Aorta (tissue), 5 donors: ENCODE measurements at regions of chr15 and their contacts with region 1.

Region 1: DNA sequence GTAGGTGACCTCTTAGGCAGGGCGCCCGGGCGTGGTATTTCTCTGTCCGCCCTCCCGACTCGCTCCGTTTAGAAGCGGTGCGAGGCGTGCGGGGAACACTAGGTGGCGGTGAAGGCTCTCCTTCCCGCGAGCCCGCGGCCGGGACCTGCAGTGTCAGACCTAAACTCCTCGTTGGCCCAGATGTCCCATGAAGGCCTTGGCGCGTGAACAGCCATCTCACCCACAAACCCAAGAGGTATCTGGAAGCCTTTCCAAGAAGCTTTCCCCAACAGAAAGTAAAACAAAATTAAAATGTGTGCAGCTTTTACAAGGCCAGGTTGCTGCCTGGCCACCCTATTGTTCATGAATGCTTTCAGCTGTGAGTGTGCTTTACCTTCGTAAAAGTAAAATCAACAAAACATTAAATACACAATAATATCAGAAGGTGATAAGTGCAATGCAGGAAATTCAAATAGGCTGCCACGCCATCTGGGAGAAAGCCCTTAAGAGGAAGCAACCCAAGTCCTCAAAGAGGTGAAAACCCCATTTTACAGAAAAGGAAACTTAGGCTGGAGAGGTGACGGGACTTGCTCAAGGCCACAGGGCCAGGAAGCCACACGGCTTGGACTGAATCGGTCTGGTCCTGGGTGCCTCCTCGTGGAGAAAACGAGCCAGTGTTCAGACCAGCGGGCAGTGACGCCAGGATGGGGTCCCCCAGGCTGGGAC is 120.3 kb downstream of the ETFA start:
- DNase-seq: peak; percentile 83 to 94
- ATAC-seq: peak; percentile 84
- H3K4me3 ChIP-seq: no peak overlapping the region
- H3K27ac ChIP-seq: no peak overlapping the region
- H3K4me1 ChIP-seq: no peaks in the 10 kb centered on the region
- H3K27me3 ChIP-seq: no peaks in the 10 kb centered on the region

Region 2: GRCh38 chr15:75994220-75994619 is 196.8 kb before region 1 on chr15:
- intact Hi-C with region 1: no loop called
- DNase-seq: no peak
- ATAC-seq: no peak
- H3K4me3 ChIP-seq: no peak overlapping the region
- H3K27ac ChIP-seq: no peak overlapping the region
- H3K4me1 ChIP-seq: no peaks in the 10 kb centered on the region
- H3K27me3 ChIP-seq: no peaks in the 10 kb centered on the region

Region 3: DNA sequence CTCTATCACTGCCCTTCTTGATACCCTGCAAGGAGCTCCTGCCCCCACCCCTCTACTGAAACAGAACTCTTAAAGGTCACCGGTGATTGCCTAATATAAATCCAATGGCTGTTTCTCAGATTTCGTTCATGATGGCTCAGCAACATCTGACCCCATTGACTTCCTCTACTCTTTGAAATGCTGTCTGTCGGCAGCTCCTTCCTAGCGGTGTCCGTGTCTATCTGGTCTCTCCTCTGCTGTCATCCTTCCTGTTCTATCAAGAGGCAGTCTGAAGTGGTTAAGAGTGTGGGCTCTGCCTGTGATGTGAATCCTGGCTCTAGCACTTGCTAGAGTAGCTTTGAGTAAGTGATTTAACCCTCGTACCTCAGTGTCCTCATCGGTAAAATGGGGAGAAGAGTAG is 125.7 kb before region 1 on chr15:
- intact Hi-C with region 1: no loop called
- DNase-seq: no peak
- ATAC-seq: no peak
- H3K4me3 ChIP-seq: no peak overlapping the region
- H3K27ac ChIP-seq: no peak overlapping the region
- H3K4me1 ChIP-seq: no peaks in the 10 kb centered on the region
- H3K27me3 ChIP-seq: no peaks in the 10 kb centered on the region

Region 4: GRCh38 chr15:76285239-76285825 is 94.3 kb after region 1 on chr15:
- intact Hi-C with region 1: loop called in 1 of 2 experiments (anchors 10 kb)
- DNase-seq: no peak
- ATAC-seq: no peak
- H3K4me3 ChIP-seq: no peak overlapping the region
- H3K27ac ChIP-seq: no peak overlapping the region
- H3K4me1 ChIP-seq: no peaks in the 10 kb centered on the region
- H3K27me3 ChIP-seq: no peaks in the 10 kb centered on the region

Region 5: DNA sequence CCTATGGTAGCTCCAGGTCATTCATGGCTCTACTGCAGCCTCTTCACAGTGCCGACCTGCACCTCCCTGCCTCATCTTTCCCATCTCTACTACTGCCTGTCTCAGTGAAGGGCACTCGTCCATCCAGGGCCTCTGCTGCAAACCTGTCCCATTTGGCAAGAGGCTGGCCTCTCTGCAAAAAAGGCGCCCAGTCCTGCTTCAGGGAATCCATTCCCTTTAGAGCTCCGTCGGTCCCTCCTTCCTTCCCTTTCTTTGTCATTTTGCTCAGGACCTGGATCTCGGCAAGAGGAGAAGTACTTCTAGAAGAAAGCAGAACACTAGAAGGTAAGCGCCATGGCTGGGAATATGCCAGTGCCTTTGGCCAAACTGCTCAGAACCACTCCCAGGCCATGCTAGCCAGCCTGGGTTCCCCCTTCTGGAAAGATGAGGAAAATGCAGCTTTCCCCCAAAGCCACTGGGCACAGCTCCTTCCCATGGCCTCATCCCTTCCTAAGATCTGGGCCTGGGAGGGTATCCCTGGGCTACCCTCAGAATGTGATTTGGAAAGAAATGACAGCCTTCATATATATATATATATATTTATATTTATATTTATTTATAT is 139.2 kb after region 1 on chr15:
- intact Hi-C with region 1: loop called (anchors 2 to 5 kb)
- DNase-seq: peak; percentile 66 to 77
- ATAC-seq: peak; percentile 83
- H3K4me3 ChIP-seq: no peak overlapping the region
- H3K27ac ChIP-seq: no peak overlapping the region
- H3K4me1 ChIP-seq: no peaks in the 10 kb centered on the region
- H3K27me3 ChIP-seq: no peaks in the 10 kb centered on the region

Region 6: DNA sequence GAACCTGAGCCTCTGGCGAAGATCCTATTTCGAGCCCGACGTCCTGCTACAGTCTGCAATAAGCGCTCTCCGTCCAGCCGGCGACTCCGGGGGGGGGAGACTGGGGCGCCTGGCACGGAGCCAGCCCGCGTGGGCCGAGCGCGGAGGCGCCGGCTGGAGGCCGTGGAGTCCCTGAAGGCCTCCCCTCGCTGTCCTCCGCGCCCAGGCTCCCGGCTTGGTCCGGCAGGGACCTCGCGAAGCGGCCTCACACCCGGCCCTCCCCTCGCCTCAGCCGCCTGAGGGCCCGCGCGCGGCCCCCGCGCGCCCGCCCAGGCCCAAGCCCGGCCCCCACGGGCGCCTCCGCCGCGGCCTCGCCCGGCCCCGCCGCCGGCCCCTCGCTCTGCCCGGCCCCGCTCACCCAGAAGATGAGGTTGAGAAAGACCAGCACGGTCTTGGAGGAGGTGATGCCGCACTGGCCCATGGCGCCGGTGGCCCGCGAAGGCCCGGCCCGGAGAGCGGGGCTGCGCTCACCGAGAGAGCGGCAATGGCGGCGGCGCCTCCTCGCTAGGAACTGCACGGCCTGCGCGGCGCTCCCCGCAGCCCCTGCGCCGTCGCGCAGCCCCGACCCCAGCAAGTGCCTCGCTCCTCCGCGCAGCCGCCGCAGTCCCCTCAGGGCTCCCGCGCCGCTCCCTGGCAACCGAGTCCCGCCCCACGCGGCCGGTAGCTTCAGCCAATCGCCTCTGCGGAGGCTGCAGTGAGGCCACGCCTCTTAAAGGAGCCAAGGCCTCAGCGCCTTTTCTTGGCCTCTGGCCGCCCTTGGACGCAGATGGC is 879.7 kb after region 1 on chr15 and contains the start of gene TSPAN3:
- intact Hi-C with region 1: loop called in 1 of 2 experiments (anchors 5 kb)
- DNase-seq: peak; percentile 96 to 97
- ATAC-seq: peak; percentile 97
- H3K4me3 ChIP-seq: peak within 1 kb of the TSS; percentile 95 to 99
- H3K27ac ChIP-seq: peak within 1 kb of the TSS; percentile 77 to 91
- H3K4me1 ChIP-seq: peaks cover 5 to 6% of the 10 kb centered on the region in 2 donors
- H3K27me3 ChIP-seq: no peaks in the 10 kb centered on the region
- total RNA-seq, gene TSPAN3: 106 to 121 TPM